Activated CD4-positive, alpha-beta memory T cell treated with anti-CD3 and anti-CD28 coated beads for 36 hours (primary cell): ENCODE measurements at regions of chr6 and their contacts with region 1.

Region 1: GRCh38 chr6:37018198-37019064 is 13.0 kb downstream of the FGD2 start:
- DNase-seq: peak; percentile 96
- H3K4me3 Mint-ChIP-seq: no peak overlapping the region
- H3K27ac Mint-ChIP-seq: peak overlapping the region; percentile 61
- H3K4me1 Mint-ChIP-seq: peaks cover 44% of the 10 kb centered on the region
- H3K27me3 Mint-ChIP-seq: no peaks in the 10 kb centered on the region

Region 2: DNA sequence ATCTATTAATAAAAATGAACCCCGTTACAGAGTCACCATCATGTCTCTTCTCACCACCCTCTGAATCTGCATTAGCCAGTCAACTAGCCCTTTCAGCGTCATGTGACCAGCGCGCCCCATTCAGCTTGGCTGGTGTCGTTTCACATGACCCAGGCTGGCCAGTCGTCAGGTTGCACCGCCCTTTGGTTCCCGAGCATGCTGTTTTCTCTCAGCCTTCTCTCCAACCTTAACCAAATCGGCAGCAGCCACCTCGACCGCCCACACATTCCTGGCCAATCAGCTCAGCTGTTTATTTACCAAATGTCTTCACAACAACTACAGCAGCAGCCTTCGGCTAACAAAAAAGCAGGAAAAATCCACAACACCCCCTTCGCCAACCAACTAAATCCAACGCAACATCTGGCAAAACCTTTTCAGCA is 418.6 kb before region 1 on chr6:
- CTCF ChIA-PET with region 1: interaction called, 10 read pairs
- POLR2A ChIA-PET with region 1: no interaction called
- intact Hi-C with region 1: no loop called
- DNase-seq: peak; percentile 88
- H3K4me3 Mint-ChIP-seq: peak overlapping the region; percentile 96
- H3K27ac Mint-ChIP-seq: peak overlapping the region; percentile 77
- H3K4me1 Mint-ChIP-seq: peaks cover 64% of the 10 kb centered on the region
- H3K27me3 Mint-ChIP-seq: no peaks in the 10 kb centered on the region

Region 3: DNA sequence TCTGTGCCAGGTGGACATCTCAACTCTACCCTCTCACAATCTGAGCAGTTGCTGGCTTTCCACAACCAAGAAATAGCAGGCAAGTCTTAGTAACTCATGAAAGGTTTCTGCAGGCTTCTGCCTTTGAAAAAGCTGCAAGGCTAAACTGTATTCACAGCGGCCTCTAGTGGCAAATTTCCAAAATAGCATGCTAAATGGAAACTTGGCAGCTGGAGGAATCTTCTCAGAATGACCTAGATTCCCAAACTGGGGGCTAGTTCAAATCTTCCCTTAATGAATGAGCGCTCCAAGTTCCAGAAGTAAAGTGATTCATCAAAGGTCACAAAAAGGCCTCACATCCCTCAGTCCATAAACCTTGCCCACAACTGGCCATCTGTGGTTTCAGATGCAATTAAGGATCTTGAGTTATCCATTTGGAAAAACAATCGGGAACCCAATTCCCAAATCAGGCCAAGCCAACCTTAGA is 167.2 kb before region 1 on chr6:
- CTCF ChIA-PET with region 1: interaction called, 28 read pairs
- POLR2A ChIA-PET with region 1: no interaction called
- intact Hi-C with region 1: no loop called
- DNase-seq: peak; percentile 34
- H3K4me3 Mint-ChIP-seq: no peak overlapping the region
- H3K27ac Mint-ChIP-seq: no peak overlapping the region
- H3K4me1 Mint-ChIP-seq: no peaks in the 10 kb centered on the region
- H3K27me3 Mint-ChIP-seq: no peaks in the 10 kb centered on the region

Region 4: GRCh38 chr6:36912586-36912985 is 105.8 kb before region 1 on chr6:
- CTCF ChIA-PET with region 1: interaction called, 29 read pairs
- POLR2A ChIA-PET with region 1: interaction called, 5 read pairs
- intact Hi-C with region 1: loop called (anchors 1 kb)
- DNase-seq: peak; percentile 81
- H3K4me3 Mint-ChIP-seq: peak overlapping the region; percentile 27
- H3K27ac Mint-ChIP-seq: peak overlapping the region; percentile 70
- H3K4me1 Mint-ChIP-seq: peaks cover 51% of the 10 kb centered on the region
- H3K27me3 Mint-ChIP-seq: no peaks in the 10 kb centered on the region

Region 5: DNA sequence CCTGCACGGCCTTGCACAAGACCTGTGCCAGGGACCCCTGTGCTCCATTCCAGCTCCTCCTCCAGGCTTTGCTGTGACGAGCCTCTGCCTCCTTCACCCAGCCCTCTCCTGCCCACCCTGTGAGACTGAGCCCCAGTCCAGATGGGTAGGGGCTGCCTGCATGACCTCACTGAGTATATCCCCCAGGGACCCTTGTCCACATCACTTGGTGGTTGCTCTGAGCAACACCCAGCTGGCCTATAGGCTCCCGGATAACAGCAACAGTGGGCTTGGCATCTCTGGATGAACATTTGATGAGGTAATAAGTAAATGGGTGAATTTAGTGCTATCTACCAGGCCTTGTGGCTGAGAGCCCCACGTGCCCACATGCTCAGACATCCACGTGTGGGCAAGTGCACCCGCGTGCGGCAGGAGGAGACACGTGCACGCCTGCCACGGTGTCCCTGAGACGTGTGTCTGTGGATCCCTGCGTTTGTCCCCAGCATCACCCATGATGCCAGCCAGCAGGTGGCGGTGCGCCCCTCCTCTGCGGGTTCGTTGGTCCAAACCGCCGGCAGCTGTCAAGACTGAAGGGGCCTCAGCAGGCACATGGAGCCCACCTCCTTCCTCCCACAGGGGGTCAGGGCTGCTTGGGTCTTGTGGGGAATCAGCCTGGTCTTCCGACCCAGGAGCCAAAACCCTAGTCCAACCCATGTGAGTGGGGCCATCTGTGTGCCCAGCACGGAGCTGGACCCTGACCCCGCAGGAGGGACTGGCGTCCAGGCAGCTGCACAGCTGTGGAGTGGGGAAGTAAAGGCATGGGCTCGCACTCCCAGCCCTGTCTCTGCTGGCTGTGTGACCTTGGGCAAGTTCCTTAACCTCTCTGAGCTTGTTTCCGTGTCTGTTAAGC is 33.0 kb after region 1 on chr6:
- CTCF ChIA-PET with region 1: interaction called, 186 read pairs
- POLR2A ChIA-PET with region 1: interaction called, 6 read pairs
- intact Hi-C with region 1: loop called (anchors 1 kb)
- DNase-seq: peak; percentile 95
- H3K4me3 Mint-ChIP-seq: peak overlapping the region; percentile 53
- H3K27ac Mint-ChIP-seq: peak overlapping the region; percentile 98
- H3K4me1 Mint-ChIP-seq: peaks cover 55% of the 10 kb centered on the region
- H3K27me3 Mint-ChIP-seq: no peaks in the 10 kb centered on the region

Region 6: DNA sequence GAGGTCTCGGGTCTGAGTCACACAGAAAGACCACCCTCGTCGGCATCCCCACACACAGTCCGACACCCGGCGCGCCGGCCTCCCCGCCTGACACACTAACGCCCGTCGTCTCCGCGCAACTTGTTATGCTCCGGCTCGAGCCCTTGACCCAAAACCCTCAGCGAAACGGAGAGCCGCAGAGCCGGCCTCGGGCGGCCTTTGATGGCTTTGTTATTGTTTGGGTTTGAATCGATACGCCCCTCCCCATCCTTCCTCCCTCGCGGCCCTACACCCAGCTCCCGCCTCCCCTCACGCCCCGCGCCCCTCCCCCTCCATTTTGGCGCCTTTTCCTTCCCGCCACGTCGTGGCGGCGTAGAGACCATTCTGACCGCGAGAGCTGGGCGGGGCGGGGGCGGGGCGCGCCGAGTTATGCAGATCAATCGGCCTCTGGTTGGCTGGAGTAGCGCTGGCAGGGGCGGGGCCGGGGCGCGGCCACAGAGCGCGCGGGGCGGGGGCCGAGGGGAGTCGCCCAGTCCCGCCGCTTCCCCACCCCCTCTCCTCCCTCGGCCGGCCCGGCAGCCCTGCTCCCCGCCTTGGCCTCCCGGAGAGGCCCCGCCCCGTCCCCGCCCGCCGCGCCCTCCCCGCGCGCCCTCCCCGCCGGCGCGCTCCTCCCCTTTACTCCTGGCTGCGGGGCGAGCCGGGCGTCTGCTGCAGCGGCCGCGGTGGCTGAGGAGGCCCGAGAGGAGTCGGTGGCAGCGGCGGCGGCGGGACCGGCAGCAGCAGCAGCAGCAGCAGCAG is 151.3 kb after region 1 on chr6 and contains the start of gene PIM1:
- CTCF ChIA-PET with region 1: interaction called, 560 read pairs
- POLR2A ChIA-PET with region 1: interaction called, 20 read pairs
- intact Hi-C with region 1: loop called (anchors 1 kb)
- DNase-seq: peak; percentile 100
- H3K4me3 Mint-ChIP-seq: peak within 1 kb of the TSS; percentile 90
- H3K27ac Mint-ChIP-seq: peak within 1 kb of the TSS; percentile 97
- H3K4me1 Mint-ChIP-seq: peaks cover 32% of the 10 kb centered on the region
- H3K27me3 Mint-ChIP-seq: no peaks in the 10 kb centered on the region
- total RNA-seq, gene PIM1: 204 TPM

Region 7: GRCh38 chr6:37314487-37315156 is 296.2 kb after region 1 on chr6:
- CTCF ChIA-PET with region 1: interaction called, 59 read pairs
- POLR2A ChIA-PET with region 1: no interaction called
- intact Hi-C with region 1: loop called (anchors 2 kb)
- DNase-seq: peak; percentile 66
- H3K4me3 Mint-ChIP-seq: no peak overlapping the region
- H3K27ac Mint-ChIP-seq: no peak overlapping the region
- H3K4me1 Mint-ChIP-seq: peaks cover 3% of the 10 kb centered on the region
- H3K27me3 Mint-ChIP-seq: no peaks in the 10 kb centered on the region